ENCODE measurements at regions of chr11 and their contacts with region 1.

Region 1: DNA sequence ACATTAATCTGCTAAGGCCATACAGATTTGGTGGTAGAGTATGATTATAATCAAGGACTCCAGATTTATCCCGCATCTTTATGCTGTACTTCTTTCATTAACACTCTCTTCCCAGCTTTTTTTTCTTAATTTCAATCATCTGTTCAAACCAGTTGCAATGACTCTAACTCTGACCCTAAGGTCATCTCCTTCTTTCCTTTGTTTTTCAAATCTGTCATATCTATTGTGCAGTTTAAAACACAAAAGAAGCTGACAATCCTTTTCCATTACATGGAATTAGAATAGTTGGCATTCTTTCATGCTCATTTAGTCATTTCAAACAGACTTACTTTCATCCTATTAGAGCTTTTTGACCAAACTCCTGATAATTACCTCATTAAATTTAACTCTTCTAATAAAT is 53.6 kb upstream of the GRM5 start:
- DNase-seq: no peak
- H3K4me3 ChIP-seq: no peak overlapping the region
- H3K27ac ChIP-seq: no peak overlapping the region
- H3K4me1 ChIP-seq: no peaks in the 10 kb centered on the region
- H3K27me3 ChIP-seq: no peaks in the 10 kb centered on the region

Region 2: GRCh38 chr11:89613911-89614310 is 494.5 kb after region 1 on chr11:
- in situ Hi-C with region 1: loop called (anchors 25 kb)
- DNase-seq: peak; percentile 18
- H3K4me3 ChIP-seq: no peak overlapping the region
- H3K27ac ChIP-seq: no peak overlapping the region
- H3K4me1 ChIP-seq: no peaks in the 10 kb centered on the region
- H3K27me3 ChIP-seq: no peaks in the 10 kb centered on the region

Region 3: GRCh38 chr11:90113541-90113940 is 994.1 kb after region 1 on chr11:
- in situ Hi-C with region 1: loop called (anchors 25 kb)
- DNase-seq: peak; percentile 16
- H3K4me3 ChIP-seq: no peak overlapping the region
- H3K27ac ChIP-seq: no peak overlapping the region
- H3K4me1 ChIP-seq: no peaks in the 10 kb centered on the region
- H3K27me3 ChIP-seq: 0 out of 2 replicates have a peak, but pooled peaks cover 4% of the 10 kb centered on the region

Measured in GM23248 (cell line).